ENCODE measurements at regions of chr5 and their contacts with region 1.

Region 1: GRCh38 chr5:141783005-141783941 is 94.9 kb downstream of the PCDH1 start:
- DNase-seq: no peak
- H3K4me3 ChIP-seq: no peak overlapping the region
- H3K27ac ChIP-seq: no peak overlapping the region
- H3K4me1 ChIP-seq: peaks cover 0 to 20% (median 7%) of the 10 kb centered on the region in 4 experiments; a peak in 6 of 7 replicates
- H3K27me3 ChIP-seq: no peaks in the 10 kb centered on the region
- CTCF ChIP-seq: no peak
- EP300 ChIP-seq: no peak
- POLR2A ChIP-seq: no peak
- RAD21 ChIP-seq: no peak

Region 2: DNA sequence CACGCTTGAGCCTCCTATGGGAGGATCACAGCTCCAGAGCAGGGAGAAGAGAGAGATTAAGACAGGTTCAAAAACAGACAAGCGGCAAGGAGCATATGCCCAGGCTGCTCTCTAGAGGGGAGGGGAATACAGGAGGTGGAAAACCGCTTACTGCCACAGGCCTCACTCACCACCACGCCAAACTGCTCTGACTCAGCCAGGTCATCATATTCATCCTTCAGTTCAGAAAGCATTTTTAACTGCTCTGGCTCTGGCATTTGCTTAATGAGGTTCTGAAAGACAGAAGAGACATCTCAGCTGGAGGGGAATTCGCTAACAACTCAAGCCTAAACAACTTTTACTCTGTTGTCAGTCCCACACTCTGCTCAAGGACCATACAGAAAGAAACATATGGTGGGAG is 254.3 kb before region 1 on chr5:
- CTCF ChIA-PET with region 1: no interaction called
- POLR2A ChIA-PET with region 1: no interaction called
- DNase-seq: no peak
- H3K4me3 ChIP-seq: no peak overlapping the region
- H3K27ac ChIP-seq: no peak overlapping the region
- H3K4me1 ChIP-seq: peaks cover under 1 to 13% (median 6%) of the 10 kb centered on the region in 4 experiments; a peak in 6 of 7 replicates
- H3K27me3 ChIP-seq: no peaks in the 10 kb centered on the region
- CTCF ChIP-seq: no peak
- EP300 ChIP-seq: no peak
- POLR2A ChIP-seq: no peak
- RAD21 ChIP-seq: no peak

Region 3: GRCh38 chr5:141771031-141771430 is 12.2 kb before region 1 on chr5:
- CTCF ChIA-PET with region 1: interaction called, 13 read pairs
- POLR2A ChIA-PET with region 1: interaction called, 4 read pairs
- DNase-seq: no peak
- H3K4me3 ChIP-seq: no peak overlapping the region
- H3K27ac ChIP-seq: no peak overlapping the region
- H3K4me1 ChIP-seq: peaks cover 0 to 7% (median 3%) of the 10 kb centered on the region in 4 experiments; a peak in 5 of 7 replicates
- H3K27me3 ChIP-seq: no peaks in the 10 kb centered on the region; a peak in 1 of 7 replicates
- CTCF ChIP-seq: no peak
- EP300 ChIP-seq: no peak
- POLR2A ChIP-seq: no peak
- RAD21 ChIP-seq: no peak

Region 4: GRCh38 chr5:141793881-141794280 is 10.6 kb after region 1 on chr5:
- CTCF ChIA-PET with region 1: interaction called, 24 read pairs
- POLR2A ChIA-PET with region 1: interaction called, 3 read pairs
- DNase-seq: no peak
- H3K4me3 ChIP-seq: no peak overlapping the region
- H3K27ac ChIP-seq: no peak overlapping the region
- H3K4me1 ChIP-seq: peaks cover 0 to 9% (median 2%) of the 10 kb centered on the region in 4 experiments; a peak in 2 of 7 replicates
- H3K27me3 ChIP-seq: no peaks in the 10 kb centered on the region
- CTCF ChIP-seq: no peak
- EP300 ChIP-seq: no peak
- POLR2A ChIP-seq: no peak
- RAD21 ChIP-seq: no peak

Region 5: DNA sequence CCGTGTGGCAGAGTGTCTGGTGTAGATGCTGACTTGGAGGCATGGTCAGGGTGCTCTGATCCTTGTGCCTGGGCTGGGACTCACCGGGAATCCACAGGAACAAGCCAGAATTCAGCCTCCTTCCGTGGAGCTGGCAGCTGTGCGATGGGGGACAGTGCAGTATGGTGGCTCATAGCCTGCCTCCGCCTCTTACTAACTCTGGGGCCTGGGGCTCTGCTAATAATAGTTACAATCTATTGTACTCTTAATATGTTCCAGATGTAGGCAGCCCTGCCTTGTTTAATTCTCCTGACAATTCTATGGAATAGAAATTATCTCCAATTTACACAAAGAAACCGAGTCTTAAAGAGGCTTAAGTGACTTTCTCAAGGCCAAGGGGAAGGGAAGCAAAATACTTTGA is 17.3 kb after region 1 on chr5:
- CTCF ChIA-PET with region 1: interaction called, 156 read pairs
- POLR2A ChIA-PET with region 1: interaction called, 4 read pairs
- DNase-seq: no peak
- H3K4me3 ChIP-seq: no peak overlapping the region
- H3K27ac ChIP-seq: no peak overlapping the region
- H3K4me1 ChIP-seq: peaks cover 4 to 19% (median 8%) of the 10 kb centered on the region in 4 experiments
- H3K27me3 ChIP-seq: no peaks in the 10 kb centered on the region
- CTCF ChIP-seq: no peak
- EP300 ChIP-seq: no peak
- POLR2A ChIP-seq: no peak
- RAD21 ChIP-seq: no peak

Region 6: GRCh38 chr5:141805874-141806595 is 22.8 kb after region 1 on chr5:
- CTCF ChIA-PET with region 1: interaction called, 210 read pairs
- POLR2A ChIA-PET with region 1: interaction called, 8 read pairs
- DNase-seq: no peak
- H3K4me3 ChIP-seq: no peak overlapping the region
- H3K27ac ChIP-seq: no peak overlapping the region
- H3K4me1 ChIP-seq: peaks cover 11 to 39% (median 17%) of the 10 kb centered on the region in 4 experiments
- H3K27me3 ChIP-seq: no peaks in the 10 kb centered on the region; a peak in 1 of 7 replicates
- CTCF ChIP-seq: no peak
- EP300 ChIP-seq: no peak
- POLR2A ChIP-seq: no peak
- RAD21 ChIP-seq: no peak

Measured in H1 (cell line).